CD8-positive, alpha-beta memory T cell (primary cell): ENCODE measurements at regions of chr19 and their contacts with region 1.

Region 1: DNA sequence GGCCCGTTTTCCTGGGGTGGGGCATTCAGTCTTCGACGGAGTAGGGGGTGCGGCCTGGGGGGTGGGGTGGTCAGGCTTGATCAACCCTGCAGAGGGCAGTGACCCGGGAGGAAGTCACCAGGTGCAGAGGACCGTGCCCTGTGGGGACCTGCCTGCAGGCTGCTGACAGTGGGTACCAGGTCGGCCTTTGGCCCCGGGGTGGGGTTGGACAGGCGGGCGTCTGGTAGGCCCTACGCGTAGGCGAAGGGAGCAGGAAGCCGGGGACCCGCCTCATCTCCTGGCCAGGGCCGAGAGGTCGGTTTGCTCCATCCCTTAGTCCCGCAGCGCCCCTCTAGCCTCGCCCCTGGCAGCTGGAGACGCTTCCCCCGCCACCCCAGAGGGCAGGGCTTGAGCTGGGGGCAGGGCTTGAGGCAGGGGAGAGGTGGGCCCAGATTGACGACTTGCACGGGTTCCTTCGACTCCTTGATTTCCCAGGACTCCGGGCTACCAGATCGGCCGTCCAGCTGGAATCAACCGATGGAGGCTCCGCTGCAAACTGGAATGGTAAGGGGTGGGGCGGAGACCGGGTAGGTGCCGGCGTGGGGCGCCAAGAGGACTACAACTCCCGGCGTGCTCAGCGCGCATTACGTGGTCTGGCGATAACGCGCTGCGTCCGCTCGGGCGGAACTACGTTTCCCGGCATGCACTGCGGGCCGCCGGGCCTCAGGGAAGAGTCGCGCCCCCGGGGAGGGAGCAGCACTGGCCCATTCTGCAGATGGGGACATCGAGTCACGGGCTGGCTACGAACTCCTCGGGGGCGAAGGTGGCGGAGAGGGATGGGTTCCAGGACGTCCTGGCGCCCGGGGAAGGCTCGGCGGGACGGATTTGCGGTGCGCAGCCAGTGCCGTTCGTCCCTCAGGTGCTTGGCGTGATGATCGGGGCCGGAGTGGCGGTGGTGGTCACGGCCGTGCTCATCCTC is at the start of gene PNPLA6:
- DNase-seq: peak; percentile 88 to 93 (median 90)
- H3K4me3 ChIP-seq: peak within 1 kb of the TSS; percentile 97
- H3K4me3 Mint-ChIP-seq: peak within 1 kb of the TSS; percentile 94 to 97 (median 95)
- H3K27ac ChIP-seq: peak within 1 kb of the TSS; percentile 73
- H3K27ac Mint-ChIP-seq: peak within 1 kb of the TSS; percentile 89 to 96 (median 93)
- H3K4me1 ChIP-seq: peaks cover 13% of the 10 kb centered on the region
- H3K4me1 Mint-ChIP-seq: peaks cover 18 to 31% (median 20%) of the 10 kb centered on the region in 3 donors
- H3K27me3 ChIP-seq: no peaks in the 10 kb centered on the region
- H3K27me3 Mint-ChIP-seq: peaks cover 0 to under 1% of the 10 kb centered on the region in 2 donors
- total RNA-seq, gene PNPLA6: 112 to 117 TPM

Region 2: DNA sequence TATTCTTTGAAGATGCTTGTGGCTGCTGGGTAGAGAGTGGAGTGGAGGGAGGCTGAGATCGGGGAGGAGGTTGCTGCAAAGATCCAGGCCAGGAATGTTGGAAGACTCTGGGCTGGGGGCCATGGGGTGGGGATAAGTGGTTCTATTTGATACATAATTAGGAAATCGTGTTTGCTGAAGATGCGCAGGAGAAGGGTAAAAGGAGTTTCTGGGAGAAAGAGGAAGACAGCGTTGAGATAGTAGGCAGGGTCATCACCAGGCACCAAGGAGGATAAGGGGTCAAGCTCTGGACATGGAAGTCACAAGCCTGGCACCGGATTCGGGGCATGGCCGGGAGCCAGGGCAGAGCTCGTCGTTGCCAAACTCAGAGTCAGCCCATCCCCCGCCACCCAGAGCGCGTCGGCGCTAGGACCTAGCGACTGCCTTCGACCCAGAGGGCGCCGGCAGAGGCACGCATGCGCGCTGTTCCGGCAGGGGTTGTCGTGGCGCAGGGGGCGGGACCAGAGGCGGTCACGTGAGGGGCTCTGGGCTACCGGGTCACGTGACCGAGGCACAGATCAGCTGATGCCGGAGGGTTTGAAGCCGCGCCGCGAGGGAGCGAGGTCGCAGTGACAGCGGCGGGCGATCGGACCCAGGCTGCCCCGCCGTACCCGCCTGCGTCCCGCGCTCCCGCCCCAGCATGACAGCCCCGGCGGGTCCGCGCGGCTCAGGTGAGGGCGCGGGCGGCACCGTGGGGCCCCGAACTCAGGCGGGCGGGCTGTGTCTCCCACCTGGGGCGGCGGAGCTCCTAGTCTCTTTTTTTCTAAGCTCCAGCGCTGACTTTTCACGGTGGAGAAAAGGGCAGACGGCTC is 13.0 kb before region 1 on chr19 and contains the start of gene MCOLN1:
- CTCF ChIA-PET with region 1: interaction called, 35 read pairs
- POLR2A ChIA-PET with region 1: interaction called, 20 read pairs
- DNase-seq: peak; percentile 98 to 100 (median 99)
- H3K4me3 ChIP-seq: peak within 1 kb of the TSS; percentile 33
- H3K4me3 Mint-ChIP-seq: peak within 1 kb of the TSS; percentile 74 to 91 (median 83)
- H3K27ac ChIP-seq: no peak within 1 kb of the TSS
- H3K27ac Mint-ChIP-seq: peak within 1 kb of the TSS; percentile 54 to 89 (median 86)
- H3K4me1 ChIP-seq: peaks cover 17% of the 10 kb centered on the region
- H3K4me1 Mint-ChIP-seq: peaks cover 16 to 18% (median 17%) of the 10 kb centered on the region in 3 donors
- H3K27me3 ChIP-seq: no peaks in the 10 kb centered on the region
- H3K27me3 Mint-ChIP-seq: peaks cover 3 to 10% of the 10 kb centered on the region in 2 donors
- total RNA-seq, gene MCOLN1: 19.4 to 19.6 TPM